ENCODE measurements at regions of chr7 and their contacts with region 1.

Region 1: DNA sequence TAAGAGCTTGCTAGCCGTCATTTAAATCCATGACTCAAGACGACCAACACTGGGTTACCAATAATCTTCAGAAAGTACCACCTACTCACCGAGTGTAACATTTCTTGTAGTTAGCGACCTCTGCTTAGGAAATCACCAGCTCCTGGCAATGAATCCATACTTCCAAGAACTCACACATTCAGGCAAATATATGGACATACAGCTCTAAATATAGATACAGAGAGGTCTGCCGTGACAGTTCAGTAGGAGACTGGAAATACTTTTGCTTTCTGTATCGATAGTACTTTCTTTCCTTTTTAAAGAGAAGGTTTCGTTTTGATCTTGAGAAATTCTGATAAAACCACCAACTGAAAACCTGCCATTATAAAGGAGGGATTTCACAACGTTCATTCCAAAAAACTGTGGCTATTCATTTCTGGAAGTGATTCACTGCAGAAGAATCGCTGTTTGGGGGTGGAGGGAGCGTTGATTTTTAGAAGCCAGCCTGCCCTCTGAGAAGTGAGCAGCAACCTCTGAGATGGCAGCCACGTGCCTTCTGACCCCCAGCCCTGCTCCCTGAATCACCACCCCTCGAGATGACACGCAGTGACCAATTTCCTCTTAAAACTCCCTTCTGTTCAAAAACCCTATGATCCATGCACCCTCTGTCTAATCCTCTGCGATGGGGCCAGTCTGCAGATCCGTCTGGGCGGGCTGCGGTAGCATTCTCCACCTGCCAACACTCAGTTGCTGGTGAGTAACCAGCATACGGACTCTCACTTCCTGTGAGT is 179.0 kb upstream of the KLF14 start:
- DNase-seq: peak; percentile 80
- ATAC-seq: peak; percentile 95
- H3K4me3 ChIP-seq: peak overlapping the region; percentile 58
- H3K27ac ChIP-seq: peak overlapping the region; percentile 94
- H3K4me1 ChIP-seq: peaks cover 44% of the 10 kb centered on the region
- H3K27me3 ChIP-seq: no peaks in the 10 kb centered on the region
- CTCF ChIP-seq: no peak
- EP300 ChIP-seq: peak; percentile 39 to 78
- POLR2A ChIP-seq: peak; percentile 66
- RAD21 ChIP-seq: no peak

Region 2: DNA sequence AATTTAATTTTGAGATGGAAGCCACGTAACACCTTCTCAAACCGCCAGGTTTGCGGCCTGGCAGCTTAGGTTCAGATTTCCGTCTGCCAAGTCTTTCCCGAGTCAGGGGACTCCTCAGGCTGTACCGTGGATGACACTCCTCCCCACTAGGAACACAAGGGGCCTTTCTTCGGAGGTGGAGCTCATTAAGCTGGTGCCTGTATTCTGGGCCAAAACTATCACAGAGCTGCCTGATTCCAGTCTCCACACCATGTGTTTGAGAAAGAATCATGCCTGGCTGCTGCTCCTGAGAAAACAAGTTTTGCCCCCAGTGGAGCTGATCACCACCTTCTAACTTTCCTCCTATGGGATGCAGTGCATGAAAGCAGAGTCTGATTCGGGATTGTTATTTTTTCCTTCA is 752.6 kb before region 1 on chr7:
- CTCF ChIA-PET with region 1: no interaction called
- POLR2A ChIA-PET with region 1: no interaction called
- RAD21 ChIA-PET with region 1: no interaction called
- SMC1A ChIA-PET with region 1: no interaction called
- in situ Hi-C with region 1: no loop called
- intact Hi-C with region 1: no loop called
- DNase-seq: no peak
- ATAC-seq: no peak
- H3K4me3 ChIP-seq: no peak overlapping the region
- H3K27ac ChIP-seq: no peak overlapping the region
- H3K4me1 ChIP-seq: no peaks in the 10 kb centered on the region
- H3K27me3 ChIP-seq: no peaks in the 10 kb centered on the region
- CTCF ChIP-seq: no peak
- EP300 ChIP-seq: no peak
- POLR2A ChIP-seq: no peak; the same call in 1 of the 2 replicates
- RAD21 ChIP-seq: no peak

Region 3: GRCh38 chr7:130929896-130930659 is 17.0 kb after region 1 on chr7:
- CTCF ChIA-PET with region 1: interaction called, 7 read pairs
- POLR2A ChIA-PET with region 1: interaction called, 3 read pairs
- RAD21 ChIA-PET with region 1: interaction called, 3 read pairs
- SMC1A ChIA-PET with region 1: interaction called, 24 read pairs
- in situ Hi-C with region 1: no loop called
- intact Hi-C with region 1: no loop called
- DNase-seq: no peak
- ATAC-seq: peak; percentile 8; the same call in 2 of the 3 replicates
- H3K4me3 ChIP-seq: no peak overlapping the region
- H3K27ac ChIP-seq: peak overlapping the region; percentile 32
- H3K4me1 ChIP-seq: peaks cover 8% of the 10 kb centered on the region
- H3K27me3 ChIP-seq: no peaks in the 10 kb centered on the region
- CTCF ChIP-seq: no peak
- EP300 ChIP-seq: no peak
- POLR2A ChIP-seq: peak; percentile 25; the same call in 1 of the 2 replicates
- RAD21 ChIP-seq: no peak

Region 4: GRCh38 chr7:130943336-130943901 is 30.4 kb after region 1 on chr7:
- CTCF ChIA-PET with region 1: interaction called, 7 read pairs
- POLR2A ChIA-PET with region 1: interaction called, 37 read pairs
- RAD21 ChIA-PET with region 1: interaction called, 7 read pairs
- SMC1A ChIA-PET with region 1: interaction called, 66 read pairs
- in situ Hi-C with region 1: no loop called
- intact Hi-C with region 1: no loop called
- DNase-seq: no peak
- ATAC-seq: peak; percentile 22
- H3K4me3 ChIP-seq: peak overlapping the region; percentile 39
- H3K27ac ChIP-seq: peak overlapping the region; percentile 78
- H3K4me1 ChIP-seq: peaks cover 36% of the 10 kb centered on the region
- H3K27me3 ChIP-seq: no peaks in the 10 kb centered on the region
- CTCF ChIP-seq: no peak
- EP300 ChIP-seq: peak in 1 of 2 experiments; percentile 43; a peak in 2 of 4 replicates
- POLR2A ChIP-seq: no peak
- RAD21 ChIP-seq: no peak

Region 5: GRCh38 chr7:130951303-130951975 is 38.4 kb after region 1 on chr7:
- CTCF ChIA-PET with region 1: interaction called, 7 read pairs
- POLR2A ChIA-PET with region 1: interaction called, 37 read pairs
- RAD21 ChIA-PET with region 1: interaction called, 4 read pairs
- SMC1A ChIA-PET with region 1: interaction called, 66 read pairs
- in situ Hi-C with region 1: no loop called
- intact Hi-C with region 1: no loop called
- DNase-seq: no peak
- ATAC-seq: peak; percentile 45
- H3K4me3 ChIP-seq: peak overlapping the region; percentile 44; the same call in 1 of the 2 replicates
- H3K27ac ChIP-seq: peak overlapping the region; percentile 45
- H3K4me1 ChIP-seq: peaks cover 33% of the 10 kb centered on the region
- H3K27me3 ChIP-seq: no peaks in the 10 kb centered on the region
- CTCF ChIP-seq: no peak
- EP300 ChIP-seq: no peak
- POLR2A ChIP-seq: peak; percentile 79
- RAD21 ChIP-seq: no peak

Region 6: DNA sequence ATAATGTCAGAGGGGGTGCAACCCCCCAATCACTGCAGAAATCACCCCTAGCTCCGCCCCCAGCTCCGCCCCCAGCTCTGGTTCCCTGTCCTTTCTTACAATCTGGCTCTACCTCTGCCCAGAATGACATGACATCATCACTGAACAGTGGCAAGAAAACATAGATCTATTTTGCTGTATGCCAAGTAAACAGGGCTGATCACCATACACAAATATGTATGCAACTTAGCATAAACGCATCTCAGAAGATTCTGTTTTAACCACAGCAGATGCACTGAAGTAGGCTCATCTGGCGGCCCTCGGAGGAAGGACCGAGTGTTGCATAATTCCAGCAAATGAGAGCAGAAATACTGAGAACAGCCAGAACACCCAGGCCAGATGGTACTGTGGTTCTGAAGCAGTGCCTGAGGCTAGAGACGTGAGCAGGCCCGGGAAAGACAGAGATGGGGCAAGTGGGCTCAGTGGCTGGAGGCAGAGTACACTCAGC is 114.3 kb after region 1 on chr7:
- CTCF ChIA-PET with region 1: interaction called, 4 read pairs
- POLR2A ChIA-PET with region 1: no interaction called
- RAD21 ChIA-PET with region 1: interaction called, 4 read pairs
- SMC1A ChIA-PET with region 1: interaction called, 6 read pairs
- in situ Hi-C with region 1: no loop called
- intact Hi-C with region 1: loop called (anchors 5 kb)
- DNase-seq: no peak
- ATAC-seq: peak; percentile 46
- H3K4me3 ChIP-seq: no peak overlapping the region
- H3K27ac ChIP-seq: peak overlapping the region; percentile 61
- H3K4me1 ChIP-seq: peaks cover 53% of the 10 kb centered on the region
- H3K27me3 ChIP-seq: no peaks in the 10 kb centered on the region
- CTCF ChIP-seq: no peak
- EP300 ChIP-seq: no peak
- POLR2A ChIP-seq: peak; percentile 38; the same call in 1 of the 2 replicates
- RAD21 ChIP-seq: 0 out of 2 replicates have a peak, but pooled peaks have one; percentile 22

Region 7: DNA sequence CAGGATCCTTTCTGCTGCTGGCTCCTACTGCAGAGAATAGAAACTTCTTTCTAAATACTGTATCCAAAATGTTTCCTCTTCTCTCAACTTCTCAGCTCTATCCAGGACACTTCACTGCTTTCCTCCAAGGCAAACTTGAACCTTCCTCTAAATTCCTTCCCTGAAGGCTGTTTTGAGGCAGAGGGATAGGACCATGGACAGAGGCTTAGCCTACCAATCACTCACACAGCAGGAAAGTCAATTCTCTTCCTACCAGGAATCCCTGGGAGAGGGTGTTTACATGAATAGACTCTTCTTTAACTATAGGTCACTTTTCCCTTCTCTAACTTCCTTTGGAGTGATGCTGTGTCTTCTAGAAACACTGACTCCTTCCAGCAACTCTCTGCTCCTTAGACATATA is 299.1 kb after region 1 on chr7:
- CTCF ChIA-PET with region 1: no interaction called
- POLR2A ChIA-PET with region 1: no interaction called
- RAD21 ChIA-PET with region 1: no interaction called
- SMC1A ChIA-PET with region 1: no interaction called
- in situ Hi-C with region 1: no loop called
- intact Hi-C with region 1: no loop called
- DNase-seq: no peak
- ATAC-seq: no peak
- H3K4me3 ChIP-seq: no peak overlapping the region
- H3K27ac ChIP-seq: no peak overlapping the region
- H3K4me1 ChIP-seq: no peaks in the 10 kb centered on the region
- H3K27me3 ChIP-seq: no peaks in the 10 kb centered on the region
- CTCF ChIP-seq: no peak
- EP300 ChIP-seq: no peak
- POLR2A ChIP-seq: no peak
- RAD21 ChIP-seq: no peak